ENCODE measurements at regions of chr19 and their contacts with region 1.

Region 1: GRCh38 chr19:38387550-38388348 is at the start of gene GGN:
- DNase-seq: peak; percentile 77
- H3K4me3 Mint-ChIP-seq: peak within 1 kb of the TSS; percentile 85
- H3K27ac Mint-ChIP-seq: peak within 1 kb of the TSS; percentile 54
- H3K4me1 Mint-ChIP-seq: peaks cover 11% of the 10 kb centered on the region
- H3K27me3 Mint-ChIP-seq: peaks cover 21% of the 10 kb centered on the region
- total RNA-seq, gene GGN: 0.71 TPM in 1 of 2 replicates, not detected in the other

Region 2: GRCh38 chr19:38229585-38230073 is 158.1 kb before region 1 on chr19:
- intact Hi-C with region 1: loop called (anchors 5 kb)
- DNase-seq: peak; percentile 71
- H3K4me3 Mint-ChIP-seq: peak overlapping the region; percentile 26
- H3K27ac Mint-ChIP-seq: no peak overlapping the region
- H3K4me1 Mint-ChIP-seq: peaks cover 10% of the 10 kb centered on the region
- H3K27me3 Mint-ChIP-seq: peaks cover 43% of the 10 kb centered on the region

Measured in activated T-helper 2 cell treated with anti-CD3 and anti-CD28 coated beads, Interferon-gamma antibody, Interleukin-2, Interleukin-4, amounts not matched to agents 10 μg/mL and 5 μg/mL and 100 μg/mL, durations not matched to agents 14 hours and 24 hours and 36 hours (primary cell).